OCI-LY7 (cell line): ENCODE measurements at regions of chr3 and their contacts with region 1.

Region 1: GRCh38 chr3:115692887-115693524 is 69.7 kb downstream of the GAP43 start:
- DNase-seq: peak; percentile 58
- H3K4me3 ChIP-seq: no peak overlapping the region
- H3K27ac ChIP-seq: no peak overlapping the region
- H3K4me1 ChIP-seq: no peaks in the 10 kb centered on the region
- CTCF ChIP-seq: peak; percentile 84

Region 2: DNA sequence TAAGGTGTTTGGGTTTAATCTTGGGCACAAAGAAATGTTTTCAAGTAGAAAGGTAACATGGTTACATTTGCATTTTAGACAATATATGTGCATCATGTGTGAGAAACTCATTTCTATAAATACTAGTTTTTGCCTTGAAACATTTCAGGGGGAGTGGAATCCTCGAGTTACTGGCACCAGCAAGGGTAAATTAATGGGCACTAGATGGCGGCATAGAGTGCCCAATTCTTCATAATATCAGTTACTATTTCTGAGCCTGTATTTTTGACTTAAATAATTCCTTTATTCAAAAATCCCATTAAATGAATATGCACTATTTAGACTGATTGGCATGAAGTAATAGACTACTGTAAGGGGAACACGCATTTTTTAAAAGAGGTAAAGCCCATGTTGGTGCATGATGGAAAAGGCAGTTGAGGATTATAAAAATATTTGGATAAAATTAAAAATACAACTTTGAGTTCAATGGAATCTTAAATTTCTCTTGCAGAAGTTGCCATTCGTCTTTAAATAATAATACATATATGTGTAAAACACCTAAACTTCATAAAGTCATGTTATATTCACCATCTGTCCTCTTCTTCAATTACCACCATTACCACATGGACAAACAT is 652.2 kb before region 1 on chr3:
- CTCF ChIA-PET with region 1: no interaction called
- POLR2A ChIA-PET with region 1: no interaction called
- intact Hi-C with region 1: loop called (anchors 5 kb)
- DNase-seq: peak; percentile 30
- H3K4me3 ChIP-seq: no peak overlapping the region
- H3K27ac ChIP-seq: no peak overlapping the region
- H3K4me1 ChIP-seq: no peaks in the 10 kb centered on the region
- CTCF ChIP-seq: peak; percentile 87

Region 3: DNA sequence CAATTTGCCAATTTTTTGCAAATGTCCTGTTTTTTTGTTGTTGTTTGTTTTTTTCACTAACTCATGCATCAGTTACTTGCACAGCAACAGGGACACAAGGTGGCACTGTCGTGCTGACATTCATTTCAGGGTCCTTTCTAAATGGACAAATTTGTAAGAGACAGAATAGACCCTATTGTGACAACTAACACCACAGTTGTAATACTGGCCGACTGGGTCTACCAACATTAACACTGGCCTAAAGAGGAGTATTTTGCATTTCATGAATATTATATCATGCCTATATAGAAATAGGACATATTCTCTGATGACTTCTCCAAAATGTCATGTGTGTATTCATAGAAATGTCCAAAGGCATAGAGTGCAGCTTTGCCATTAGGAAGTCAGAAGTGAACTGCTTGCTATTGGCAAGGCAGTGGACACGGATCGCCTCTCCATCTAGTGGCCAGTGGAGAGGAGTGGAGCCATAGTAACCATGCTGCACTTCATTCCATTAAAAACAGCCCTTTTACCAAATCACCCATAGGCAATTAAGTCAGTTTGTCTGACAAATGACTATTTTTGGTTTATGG is 600.7 kb before region 1 on chr3:
- CTCF ChIA-PET with region 1: no interaction called
- POLR2A ChIA-PET with region 1: no interaction called
- intact Hi-C with region 1: loop called (anchors 2 kb)
- DNase-seq: peak; percentile 51
- H3K4me3 ChIP-seq: no peak overlapping the region
- H3K27ac ChIP-seq: no peak overlapping the region
- H3K4me1 ChIP-seq: no peaks in the 10 kb centered on the region
- CTCF ChIP-seq: peak; percentile 93

Region 4: GRCh38 chr3:115204475-115204874 is 488.5 kb before region 1 on chr3:
- CTCF ChIA-PET with region 1: no interaction called
- POLR2A ChIA-PET with region 1: no interaction called
- intact Hi-C with region 1: no loop called
- DNase-seq: no peak
- H3K4me3 ChIP-seq: no peak overlapping the region
- H3K27ac ChIP-seq: no peak overlapping the region
- H3K4me1 ChIP-seq: no peaks in the 10 kb centered on the region
- CTCF ChIP-seq: no peak

Region 5: DNA sequence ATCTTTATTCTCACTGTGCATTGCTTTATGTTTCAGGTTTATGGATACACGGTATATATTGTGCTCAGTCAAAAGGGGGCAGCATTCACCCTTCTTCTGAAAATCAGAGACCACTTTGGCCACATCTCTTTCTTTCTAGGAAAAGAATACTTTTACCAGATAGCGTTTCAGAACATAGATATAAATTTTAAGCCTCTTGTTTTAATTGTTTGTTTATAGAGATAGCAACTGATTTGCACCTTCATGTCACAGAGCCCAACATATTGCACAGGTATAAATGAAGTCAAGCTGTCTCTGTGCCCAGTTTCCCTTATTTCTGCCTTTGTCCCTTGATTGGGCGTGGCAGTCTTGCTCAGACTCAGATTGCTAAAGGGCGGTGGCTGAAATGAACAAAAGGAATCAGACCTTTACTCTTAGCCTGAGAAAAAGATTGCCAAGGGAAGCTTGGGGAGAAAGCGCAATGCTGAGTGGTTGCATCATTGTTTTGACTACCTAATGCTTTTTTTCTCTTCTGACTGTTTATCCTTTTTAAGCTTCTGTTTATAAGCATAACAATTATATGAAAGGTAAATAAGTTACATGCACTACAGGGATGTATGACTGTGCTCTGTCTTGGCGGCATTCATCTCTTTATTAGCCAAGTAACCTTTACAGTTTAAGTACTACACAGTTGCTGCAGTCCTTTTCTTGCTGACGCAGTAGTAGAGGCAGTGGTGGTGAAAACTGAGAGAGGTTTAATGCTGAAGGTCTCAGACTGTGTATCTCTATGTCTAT is 475.1 kb before region 1 on chr3:
- CTCF ChIA-PET with region 1: no interaction called
- POLR2A ChIA-PET with region 1: no interaction called
- intact Hi-C with region 1: loop called (anchors 1 kb)
- DNase-seq: peak; percentile 27
- H3K4me3 ChIP-seq: no peak overlapping the region
- H3K27ac ChIP-seq: no peak overlapping the region
- H3K4me1 ChIP-seq: no peaks in the 10 kb centered on the region
- CTCF ChIP-seq: peak; percentile 74

Region 6: GRCh38 chr3:115766587-115767480 is 73.8 kb after region 1 on chr3:
- CTCF ChIA-PET with region 1: no interaction called
- POLR2A ChIA-PET with region 1: no interaction called
- intact Hi-C with region 1: no loop called
- DNase-seq: no peak
- H3K4me3 ChIP-seq: no peak overlapping the region
- H3K27ac ChIP-seq: no peak overlapping the region
- H3K4me1 ChIP-seq: no peaks in the 10 kb centered on the region
- CTCF ChIP-seq: no peak

Region 7: DNA sequence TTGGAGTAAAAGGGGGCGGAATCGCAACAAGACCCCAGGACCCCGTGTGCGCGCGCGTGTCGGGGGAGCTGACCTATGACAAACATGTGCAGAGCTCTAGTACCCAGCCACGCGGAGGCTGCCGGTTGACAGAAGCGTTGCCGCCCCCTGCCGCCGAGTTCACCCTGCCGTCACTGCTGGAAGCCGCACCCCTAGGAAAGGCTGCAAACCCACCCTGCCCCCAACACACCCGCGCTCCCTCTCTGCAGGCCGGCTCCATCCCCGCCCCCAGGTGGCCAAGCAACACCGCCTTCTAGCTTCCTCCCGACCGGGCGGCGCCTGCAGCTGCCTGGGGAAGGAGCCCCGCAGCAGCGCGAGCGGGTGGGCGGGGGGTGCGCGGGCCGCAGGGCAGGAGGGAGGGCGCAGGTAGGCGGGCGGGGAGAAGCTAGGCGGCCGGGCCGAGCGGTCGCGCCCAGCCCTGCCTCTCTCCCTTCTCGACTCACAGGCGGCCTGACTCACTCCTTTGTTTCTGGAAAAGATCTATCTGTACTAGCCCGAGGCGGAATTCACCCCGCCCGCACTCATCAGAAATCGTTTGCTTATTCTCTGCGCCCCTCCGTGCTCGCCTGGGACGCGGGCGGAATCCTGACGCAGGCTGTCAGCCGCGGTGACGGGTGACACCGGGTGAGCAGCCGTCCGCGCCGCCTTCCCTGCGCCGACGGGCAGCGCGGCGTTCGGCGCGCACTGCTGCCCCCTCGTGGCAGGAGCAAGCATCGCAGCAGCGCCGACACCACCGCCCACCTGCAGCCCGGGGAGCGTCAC is 91.1 kb after region 1 on chr3:
- CTCF ChIA-PET with region 1: no interaction called
- POLR2A ChIA-PET with region 1: no interaction called
- intact Hi-C with region 1: loop called (anchors 5 kb)
- DNase-seq: peak; percentile 84
- H3K4me3 ChIP-seq: peak overlapping the region; percentile 67
- H3K27ac ChIP-seq: peak overlapping the region; percentile 65
- H3K4me1 ChIP-seq: no peaks in the 10 kb centered on the region
- CTCF ChIP-seq: peak; percentile 90